Activated CD4-positive, alpha-beta T cell treated with anti-CD3 and anti-CD28 coated beads, Interleukin-2, amount 10 ng/mL, durations not matched to agents 24 days and 14 days (primary cell): ENCODE measurements at regions of chr16 and their contacts with region 1.

Region 1: GRCh38 chr16:46621006-46621933 is at the start of gene SHCBP1:
- DNase-seq: peak; percentile 96
- H3K4me3 Mint-ChIP-seq: peak within 1 kb of the TSS; percentile 97
- H3K27ac Mint-ChIP-seq: peak within 1 kb of the TSS; percentile 97
- H3K4me1 Mint-ChIP-seq: peaks cover 23% of the 10 kb centered on the region
- H3K27me3 Mint-ChIP-seq: no peaks in the 10 kb centered on the region
- total RNA-seq, gene SHCBP1: 43.9 and 47.6 TPM in 2 replicates

Region 2: DNA sequence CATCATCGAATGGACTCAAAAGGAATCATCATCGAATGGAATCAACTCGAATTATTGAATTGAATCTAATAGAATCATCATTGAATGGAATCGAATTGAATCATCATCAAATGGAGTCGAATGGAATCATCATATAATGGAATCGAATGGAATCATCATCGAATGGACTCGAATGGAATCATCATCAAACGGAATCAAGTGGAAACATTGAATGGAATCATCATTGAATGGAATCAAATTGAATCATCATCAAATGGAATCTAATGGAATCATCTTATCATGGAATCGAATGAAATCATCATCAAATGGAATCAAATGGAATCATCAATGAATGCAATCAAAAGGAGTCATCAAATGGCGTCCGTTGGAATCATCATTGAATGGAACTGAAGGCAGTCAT is 206.7 kb before region 1 on chr16:
- intact Hi-C with region 1: no loop called
- DNase-seq: no peak
- H3K4me3 Mint-ChIP-seq: no peak overlapping the region
- H3K27ac Mint-ChIP-seq: no peak overlapping the region
- H3K4me1 Mint-ChIP-seq: no peaks in the 10 kb centered on the region
- H3K27me3 Mint-ChIP-seq: no peaks in the 10 kb centered on the region

Region 3: GRCh38 chr16:46555951-46556350 is 65.3 kb before region 1 on chr16:
- intact Hi-C with region 1: loop called (anchors 1 kb)
- DNase-seq: no peak
- H3K4me3 Mint-ChIP-seq: no peak overlapping the region
- H3K27ac Mint-ChIP-seq: no peak overlapping the region
- H3K4me1 Mint-ChIP-seq: no peaks in the 10 kb centered on the region
- H3K27me3 Mint-ChIP-seq: peaks cover 9% of the 10 kb centered on the region

Region 4: DNA sequence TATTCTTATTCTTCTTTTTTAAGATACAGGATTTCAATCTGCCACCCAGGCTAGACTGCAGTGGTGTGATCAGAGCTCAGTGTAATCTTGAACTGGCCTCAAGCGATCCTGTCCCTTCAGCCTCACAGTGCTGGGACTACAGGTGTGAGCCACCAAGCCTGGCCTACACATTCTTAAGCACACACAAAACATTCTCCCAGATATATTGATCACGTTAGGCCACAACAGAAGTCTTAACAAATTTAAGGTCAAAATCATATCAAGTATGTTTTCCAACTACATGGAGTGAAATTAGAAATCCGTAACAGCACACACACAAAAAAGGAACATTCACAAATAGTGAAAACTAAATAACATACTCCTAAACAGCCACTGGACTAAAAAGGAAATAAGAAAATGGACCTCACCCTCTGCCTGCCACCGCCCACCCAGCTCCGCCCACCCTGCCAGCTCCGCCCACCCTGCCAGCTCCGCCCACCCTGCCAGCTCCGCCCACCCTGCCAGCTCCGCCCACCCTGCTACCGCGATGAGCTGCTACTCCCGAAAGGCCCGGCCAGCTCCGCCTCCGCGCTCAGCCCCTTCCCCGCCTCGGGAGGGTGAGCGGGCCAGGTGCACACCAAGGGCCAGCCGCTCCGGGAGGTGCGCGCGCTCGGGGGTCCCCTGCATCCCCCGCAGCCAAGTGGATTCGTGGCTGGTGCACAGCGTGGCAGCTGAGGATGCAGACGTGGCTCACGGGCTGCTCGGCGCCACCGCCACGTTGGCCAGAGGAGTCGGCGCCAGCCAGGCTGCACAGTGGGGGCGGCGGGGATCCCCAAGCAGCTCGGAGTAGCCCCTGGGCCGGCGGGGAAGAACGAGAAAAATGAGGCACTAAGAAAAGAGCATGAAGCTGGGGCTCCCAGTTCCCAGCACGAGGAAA is 168.5 kb after region 1 on chr16:
- intact Hi-C with region 1: loop called (anchors 5 kb)
- DNase-seq: peak; percentile 95
- H3K4me3 Mint-ChIP-seq: peak overlapping the region; percentile 79
- H3K27ac Mint-ChIP-seq: peak overlapping the region; percentile 69
- H3K4me1 Mint-ChIP-seq: peaks cover 18% of the 10 kb centered on the region
- H3K27me3 Mint-ChIP-seq: peaks cover 15% of the 10 kb centered on the region